ENCODE measurements at regions of chr6 and their contacts with region 1.

Region 1: GRCh38 chr6:56595490-56596122 is 47.1 kb downstream of the DST start:
- DNase-seq: peak; percentile 32
- CTCF ChIP-seq: peak; percentile 52

Region 2: GRCh38 chr6:55117267-55117666 is 1478.3 kb before region 1 on chr6:
- CTCF ChIA-PET with region 1: no interaction called
- POLR2A ChIA-PET with region 1: no interaction called
- DNase-seq: no peak
- CTCF ChIP-seq: no peak

Region 3: GRCh38 chr6:56297022-56297994 is 298.3 kb before region 1 on chr6:
- CTCF ChIA-PET with region 1: no interaction called
- POLR2A ChIA-PET with region 1: no interaction called
- DNase-seq: no peak
- CTCF ChIP-seq: no peak

Region 4: DNA sequence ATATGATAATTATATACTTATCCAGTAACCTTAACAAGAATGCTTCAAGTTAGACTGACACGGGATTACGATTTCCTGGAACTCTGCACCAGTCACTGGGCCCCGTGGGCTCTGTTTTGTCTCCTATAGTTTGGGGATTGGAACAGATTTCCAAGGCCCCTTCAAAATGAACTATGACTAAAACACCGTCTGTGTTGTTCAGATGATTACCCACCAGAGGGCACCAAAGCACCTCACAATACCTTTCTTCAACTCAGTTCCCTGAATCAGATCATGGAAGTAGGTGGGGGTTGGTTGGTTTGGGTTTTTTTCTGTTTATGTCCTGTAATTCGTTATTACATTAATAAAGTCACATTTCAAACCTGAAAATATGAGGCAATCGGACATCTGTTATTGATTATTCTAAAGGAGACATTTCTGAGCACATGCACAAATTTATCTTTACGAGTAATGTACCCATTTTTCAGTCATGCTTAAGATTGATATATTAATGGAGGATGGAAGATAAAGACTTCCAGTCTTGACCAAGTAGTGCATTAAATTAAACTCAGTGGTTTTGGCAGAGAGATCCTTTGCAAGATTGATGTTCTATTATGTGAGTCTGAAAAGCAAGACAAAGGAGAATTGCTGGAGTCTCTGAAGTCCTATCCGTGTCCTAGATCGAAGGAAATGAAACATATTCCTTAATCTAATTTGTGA is 236.3 kb before region 1 on chr6:
- CTCF ChIA-PET with region 1: interaction called, 28 read pairs
- POLR2A ChIA-PET with region 1: no interaction called
- DNase-seq: peak; percentile 55
- CTCF ChIP-seq: peak; percentile 58

Region 5: DNA sequence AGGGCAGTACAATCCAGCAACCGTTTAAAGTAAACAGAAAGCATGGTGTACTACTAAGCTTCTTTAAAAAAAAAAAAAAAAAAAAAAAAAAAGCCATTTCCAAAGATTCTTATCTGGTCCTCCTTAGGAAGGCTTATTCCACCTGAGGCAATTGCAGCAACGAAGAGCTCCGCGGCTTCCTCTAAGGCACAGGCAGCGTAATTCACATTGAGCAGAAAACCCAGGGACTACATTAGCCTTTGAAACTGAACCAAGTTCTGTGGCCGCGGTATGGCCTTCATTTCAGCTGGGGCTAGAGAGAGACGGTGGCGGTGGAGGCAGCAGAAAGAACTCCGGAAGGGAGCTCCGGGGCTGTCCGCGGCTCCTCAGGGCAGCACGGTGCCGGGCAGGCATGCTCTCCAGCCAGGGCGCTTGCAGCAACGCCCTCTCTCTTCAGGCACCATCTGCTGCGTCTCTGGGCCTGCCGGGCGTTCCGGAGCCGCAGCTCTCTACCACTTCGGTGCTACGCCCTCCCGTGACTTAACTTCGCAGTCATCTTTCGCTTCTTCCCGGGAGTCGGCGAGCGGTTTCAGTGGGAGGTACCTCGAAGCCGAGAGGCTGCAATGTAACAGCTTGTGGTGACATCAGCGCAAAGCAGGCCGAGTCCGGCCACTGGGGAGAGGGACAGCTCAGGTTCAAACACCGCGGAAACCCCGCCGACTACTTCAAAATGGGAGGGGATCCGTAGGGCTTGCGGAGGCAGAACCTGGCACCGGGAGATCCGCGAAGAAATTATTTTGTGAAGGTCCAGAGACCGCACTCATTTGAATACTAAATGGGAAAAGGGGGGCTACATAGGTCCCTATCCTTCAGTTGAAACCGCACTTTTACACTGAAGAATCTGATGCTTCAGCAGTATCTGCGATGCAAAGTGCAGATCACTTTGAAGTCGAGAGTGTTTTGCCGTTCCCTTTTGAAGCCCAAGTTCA is 53.0 kb before region 1 on chr6:
- CTCF ChIA-PET with region 1: interaction called, 18 read pairs
- POLR2A ChIA-PET with region 1: no interaction called
- DNase-seq: peak; percentile 84
- CTCF ChIP-seq: peak; percentile 25

Region 6: GRCh38 chr6:56570413-56571359 is 24.9 kb before region 1 on chr6:
- CTCF ChIA-PET with region 1: interaction called, 25 read pairs
- POLR2A ChIA-PET with region 1: no interaction called
- DNase-seq: peak; percentile 30
- CTCF ChIP-seq: no peak

Region 7: DNA sequence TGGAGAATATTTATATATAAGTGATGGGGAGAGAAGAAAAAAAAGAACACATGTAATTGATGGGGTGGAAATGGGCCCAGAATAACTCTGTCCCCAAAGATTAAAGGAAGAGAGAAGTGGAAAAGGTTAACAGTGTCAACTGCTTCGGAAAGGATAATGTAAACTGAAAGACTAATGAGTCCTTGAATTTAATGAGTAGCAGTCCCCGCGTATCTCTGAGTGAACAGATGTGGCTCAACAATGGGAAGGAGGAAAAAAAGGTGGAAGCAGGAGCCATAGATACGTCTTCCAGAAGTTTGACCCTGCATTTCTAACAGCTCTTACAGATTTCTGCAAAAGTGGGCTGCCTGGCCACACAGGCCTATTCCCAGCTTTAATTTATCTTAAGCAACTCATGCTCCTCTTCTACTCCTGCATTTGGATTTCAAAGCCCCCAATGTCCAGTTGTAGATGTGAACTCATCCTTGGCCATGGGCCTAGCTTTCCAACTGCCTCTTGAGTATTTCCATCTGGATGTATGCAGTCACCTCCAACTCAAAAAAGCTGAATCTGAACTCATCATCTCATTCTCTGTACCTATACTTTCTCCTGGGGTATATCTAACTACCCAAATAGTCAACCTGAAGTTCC is 14.2 kb before region 1 on chr6:
- CTCF ChIA-PET with region 1: interaction called, 19 read pairs
- POLR2A ChIA-PET with region 1: no interaction called
- DNase-seq: no peak
- CTCF ChIP-seq: no peak

Region 8: DNA sequence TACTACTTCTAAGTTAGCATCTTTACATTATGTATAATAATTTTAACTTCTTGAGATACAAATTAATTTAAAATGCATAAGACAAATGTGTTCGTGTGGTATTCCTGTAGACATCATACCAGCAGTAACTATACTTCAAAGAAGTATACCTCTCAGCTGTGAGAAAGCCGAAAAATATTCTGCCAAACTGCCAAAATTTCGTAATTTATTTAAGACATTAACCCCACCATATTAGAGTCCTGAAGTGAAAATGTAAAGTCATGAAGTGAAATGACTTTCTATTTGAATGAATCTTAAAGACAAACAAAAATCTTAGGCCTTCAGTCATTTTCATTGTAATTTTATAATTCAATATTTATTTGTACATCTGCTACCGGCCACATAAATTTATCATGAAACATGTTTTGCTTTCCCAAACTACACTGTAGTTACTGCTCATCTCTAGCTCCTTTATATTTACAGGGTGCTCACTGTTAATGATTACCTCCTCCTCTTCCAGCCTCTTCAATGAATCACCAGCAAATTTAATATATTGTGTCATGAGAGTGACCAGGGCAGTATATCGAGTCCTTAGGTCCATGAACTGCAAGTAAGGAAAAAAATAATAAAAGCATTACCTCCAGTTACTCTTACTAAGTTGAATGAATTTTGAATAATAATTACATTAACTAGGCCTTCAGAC is 28.6 kb after region 1 on chr6:
- CTCF ChIA-PET with region 1: interaction called, 103 read pairs
- POLR2A ChIA-PET with region 1: no interaction called
- DNase-seq: no peak
- CTCF ChIP-seq: no peak

Region 9: DNA sequence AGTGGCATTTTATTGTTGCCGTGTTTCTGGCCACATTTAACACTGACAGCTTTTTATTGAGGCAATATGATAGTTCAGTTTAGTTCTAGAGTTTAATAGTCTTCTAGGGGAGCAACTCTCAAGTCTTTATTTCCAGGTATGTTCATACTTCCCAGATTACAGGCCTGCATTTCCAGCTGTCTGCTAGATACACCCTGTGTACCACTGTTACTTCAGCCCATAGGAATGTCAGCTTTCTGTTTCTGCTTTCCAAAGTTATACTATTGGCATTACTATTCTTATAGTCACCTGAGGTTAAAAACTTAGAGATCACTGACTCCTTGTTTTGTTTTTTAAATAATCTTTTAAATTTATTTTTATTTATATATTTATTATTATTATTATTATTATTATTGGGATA is 502.0 kb after region 1 on chr6:
- CTCF ChIA-PET with region 1: no interaction called
- POLR2A ChIA-PET with region 1: no interaction called
- DNase-seq: no peak
- CTCF ChIP-seq: no peak